K562 (cell line): ENCODE measurements at regions of chr5 and their contacts with region 1.

Region 1: GRCh38 chr5:177362610-177363507 is 5.1 kb downstream of the RGS14 start:
- DNase-seq: peak; percentile 83 to 86 (median 85)
- ATAC-seq: peak; percentile 68
- H3K4me3 ChIP-seq: peak overlapping the region; percentile 45
- H3K27ac ChIP-seq: peak overlapping the region; percentile 67
- H3K4me1 ChIP-seq: peaks cover 44 to 76% of the 10 kb centered on the region in 2 experiments
- H3K27me3 ChIP-seq: no peaks in the 10 kb centered on the region
- CTCF ChIP-seq: no peak
- EP300 ChIP-seq: no peak
- POLR2A ChIP-seq: peak; percentile 56
- RAD21 ChIP-seq: no peak

Region 2: GRCh38 chr5:177086924-177087706 is 275.7 kb before region 1 on chr5:
- CTCF ChIA-PET with region 1: no interaction called
- POLR2A ChIA-PET with region 1: no interaction called
- in situ Hi-C with region 1: no loop called
- intact Hi-C with region 1: no loop called
- DNase-seq: peak; percentile 85 to 94 (median 92)
- ATAC-seq: peak; percentile 93
- H3K4me3 ChIP-seq: peak overlapping the region; percentile 58
- H3K27ac ChIP-seq: peak overlapping the region; percentile 66; the same call in 2 of the 3 replicates
- H3K4me1 ChIP-seq: peaks cover 24 to 32% of the 10 kb centered on the region in 2 experiments; a peak in 4 of 5 replicates
- H3K27me3 ChIP-seq: no peaks in the 10 kb centered on the region
- CTCF ChIP-seq: peak; percentile 69 to 84 (median 74)
- EP300 ChIP-seq: no peak
- POLR2A ChIP-seq: peak; percentile 80
- RAD21 ChIP-seq: peak in 1 of 2 experiments; percentile 37; a peak in 1 of 4 replicates

Region 3: DNA sequence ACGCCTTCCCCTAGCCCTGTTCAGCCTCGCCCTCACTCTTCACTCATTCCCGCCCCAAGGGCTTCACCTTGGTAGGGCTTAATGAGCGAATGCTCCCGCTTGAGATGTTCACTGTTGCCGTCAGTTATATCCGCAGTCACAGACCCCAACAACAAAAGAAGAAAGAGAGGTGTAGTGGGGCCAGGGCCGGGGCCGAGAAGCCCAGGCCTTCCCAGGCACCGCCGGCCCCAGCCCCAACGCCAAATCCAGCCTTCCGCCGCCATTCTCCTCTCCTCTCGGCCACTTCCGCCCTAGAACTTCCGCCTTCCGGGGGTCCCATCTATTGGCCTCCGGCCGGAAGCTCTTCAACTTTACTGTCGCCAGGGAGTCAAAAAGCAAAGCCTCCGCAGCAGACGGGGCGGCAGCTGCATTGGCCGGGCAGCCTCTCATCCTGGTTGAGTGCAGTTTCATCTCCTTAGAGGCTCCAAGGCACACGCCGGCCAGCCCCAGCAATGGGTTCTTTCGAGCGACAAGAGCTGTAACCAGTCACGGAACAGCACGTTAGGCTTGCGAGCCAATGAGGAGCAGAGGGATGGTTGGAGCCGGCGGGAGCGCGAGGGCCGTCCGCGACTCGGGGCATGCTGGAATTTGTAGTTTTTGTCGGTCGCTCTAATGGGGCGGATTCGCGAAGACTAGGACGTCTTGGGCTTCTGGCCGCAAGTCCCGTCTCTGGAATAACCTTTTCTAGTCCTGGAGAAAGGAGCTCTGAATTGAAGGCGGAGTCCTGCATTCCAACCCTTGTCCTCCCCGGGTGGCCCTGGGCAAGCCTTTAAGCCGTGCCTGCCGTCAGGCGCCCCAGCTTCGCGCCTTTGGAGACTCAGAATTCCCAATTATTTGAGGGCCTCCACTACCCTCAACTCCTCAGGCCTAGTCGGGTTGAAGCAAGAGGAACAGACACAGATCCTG is 11.2 kb before region 1 on chr5 and contains the start of gene LMAN2:
- CTCF ChIA-PET with region 1: no interaction called
- POLR2A ChIA-PET with region 1: interaction called, 18 read pairs
- in situ Hi-C with region 1: no loop called
- intact Hi-C with region 1: no loop called
- DNase-seq: peak; percentile 93 to 96 (median 95)
- ATAC-seq: peak; percentile 99
- H3K4me3 ChIP-seq: peak within 1 kb of the TSS; percentile 81
- H3K27ac ChIP-seq: peak within 1 kb of the TSS; percentile 95
- H3K4me1 ChIP-seq: peaks cover 17 to 24% of the 10 kb centered on the region in 2 experiments; a peak in 4 of 5 replicates
- H3K27me3 ChIP-seq: no peaks in the 10 kb centered on the region
- CTCF ChIP-seq: no peak
- EP300 ChIP-seq: peak; percentile 11; the same call in 1 of the 2 replicates
- POLR2A ChIP-seq: peak; percentile 91
- RAD21 ChIP-seq: no peak
- polyA plus RNA-seq, gene LMAN2: 2.7 to 8.5 TPM